ENCODE measurements at regions of chr16 and their contacts with region 1.

Region 1: GRCh38 chr16:8674413-8675022 is at the start of gene ABAT:
- DNase-seq: peak; percentile 91 to 96 (median 94)
- ATAC-seq: peak; percentile 100
- H3K4me3 ChIP-seq: peak within 1 kb of the TSS; percentile 22
- H3K4me1 ChIP-seq: peaks cover 6% of the 10 kb centered on the region
- CTCF ChIP-seq: no peak
- total RNA-seq, gene ABAT: 12.1 to 25.5 (median 16.5) TPM

Region 2: DNA sequence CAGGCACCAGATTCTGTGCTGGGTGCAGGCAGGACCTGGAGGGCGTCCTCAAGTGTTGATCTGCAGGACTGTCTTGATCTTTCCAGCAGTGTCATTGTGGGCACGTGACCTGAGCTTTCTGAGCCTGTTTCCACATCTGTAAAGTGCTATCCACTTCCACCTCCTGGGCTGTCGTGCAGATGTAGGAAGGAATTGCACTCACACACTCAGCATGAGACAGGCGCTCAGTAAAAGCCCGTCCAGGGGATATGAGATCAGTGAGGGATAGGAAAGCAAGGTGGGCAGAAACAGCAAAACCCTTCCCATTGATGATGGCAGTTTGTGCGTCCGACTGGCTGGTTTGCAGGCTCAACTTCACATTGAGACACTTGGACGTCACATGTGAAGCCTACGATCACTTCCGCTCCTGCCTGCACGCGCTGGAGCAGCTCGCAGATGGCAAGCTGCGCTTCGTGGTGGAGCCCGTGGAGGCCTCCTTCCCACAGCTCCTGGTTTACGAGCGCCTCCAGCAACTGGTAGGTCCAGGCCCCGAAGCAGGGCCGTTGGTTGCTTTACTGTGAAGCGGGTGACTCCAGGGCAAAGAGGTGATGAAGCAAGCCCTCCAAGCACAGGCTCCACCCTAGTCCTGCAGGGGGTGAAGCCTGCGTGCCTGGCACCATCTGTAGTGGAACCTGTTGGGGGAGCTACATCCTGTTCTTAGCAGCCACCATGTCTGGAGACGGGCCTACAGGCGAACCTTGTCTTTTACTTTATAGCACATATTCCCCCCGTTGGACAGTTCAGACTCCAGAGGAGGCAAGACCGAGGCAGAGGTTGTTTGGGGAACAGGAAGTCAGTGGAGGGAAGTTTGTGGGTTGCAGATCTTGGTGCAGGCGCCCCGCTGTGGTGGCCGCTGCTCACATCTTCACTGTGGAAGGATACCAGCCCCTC is 30.0 kb before region 1 on chr16:
- intact Hi-C with region 1: no loop called
- DNase-seq: peak in 2 of 3 donors; percentile 24 to 61
- ATAC-seq: peak; percentile 60
- H3K4me3 ChIP-seq: no peak overlapping the region
- H3K4me1 ChIP-seq: no peaks in the 10 kb centered on the region
- CTCF ChIP-seq: no peak

Region 3: DNA sequence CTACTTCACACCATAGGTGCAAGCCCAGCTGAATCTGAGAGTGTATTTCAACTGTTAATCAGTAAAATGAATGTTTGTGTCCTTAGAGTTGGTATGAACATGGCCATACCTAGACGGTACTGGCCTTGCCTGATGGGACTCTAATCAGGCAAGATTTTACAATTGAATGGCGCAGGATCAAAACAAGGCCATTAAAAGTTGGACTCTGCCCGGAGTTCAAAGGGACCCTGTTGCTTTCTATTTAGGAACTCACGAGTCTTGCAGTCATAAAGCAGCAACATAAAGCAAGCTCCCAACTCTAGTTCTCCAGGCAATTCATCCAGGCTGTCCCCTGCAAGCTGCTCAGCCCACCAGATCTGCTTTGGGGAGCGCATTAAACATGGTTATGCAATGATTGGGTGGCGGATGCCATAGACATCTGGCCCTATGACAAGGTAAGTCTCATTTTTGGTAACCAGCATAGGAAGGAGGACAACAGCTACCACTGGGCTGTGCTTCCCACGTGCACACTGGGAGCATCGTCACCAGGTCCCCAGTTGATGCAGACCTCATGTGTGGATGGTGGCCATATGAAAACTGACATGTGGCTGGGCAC is 114.2 kb after region 1 on chr16:
- intact Hi-C with region 1: loop called in 1 of 2 experiments (anchors 10 kb)
- DNase-seq: peak in 1 of 3 donors; percentile 89
- ATAC-seq: peak; percentile 94
- H3K4me3 ChIP-seq: no peak overlapping the region
- H3K4me1 ChIP-seq: peaks cover 12% of the 10 kb centered on the region
- CTCF ChIP-seq: no peak

Measured in mucosa of descending colon (tissue), 3 donors.